T-cell (primary cell): ENCODE measurements at regions of chr12 and their contacts with region 1.

Region 1: DNA sequence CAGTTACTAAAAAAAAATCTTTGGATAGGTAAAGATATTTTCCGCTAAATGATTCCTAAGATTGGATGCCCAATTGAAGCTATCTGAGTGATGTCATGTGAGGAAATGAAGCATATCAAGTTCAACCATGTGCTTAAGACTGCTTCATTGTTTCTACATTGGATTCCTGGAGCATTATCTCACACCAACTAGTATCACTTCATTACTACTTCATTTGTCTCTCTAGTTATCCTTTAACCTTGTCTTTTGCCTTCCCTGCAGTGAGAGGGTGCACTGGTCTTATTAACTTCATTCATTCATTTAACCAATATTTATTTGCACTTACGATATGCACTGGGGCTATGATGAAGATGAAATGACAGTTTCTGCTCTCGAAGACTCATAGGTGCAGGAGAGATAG is 198.1 kb downstream of the SLC38A4 start:
- DNase-seq: no peak
- ATAC-seq: no peak
- H3K4me3 ChIP-seq: no peak overlapping the region
- H3K4me3 Mint-ChIP-seq: no peak overlapping the region
- H3K27ac ChIP-seq: no peak overlapping the region
- H3K27ac Mint-ChIP-seq: no peak overlapping the region
- H3K4me1 ChIP-seq: peaks cover 0 to 4% of the 10 kb centered on the region in 2 experiments
- H3K4me1 Mint-ChIP-seq: peaks cover 7 to 10% (median 8%) of the 10 kb centered on the region in 3 donors
- H3K27me3 ChIP-seq: no peaks in the 10 kb centered on the region
- H3K27me3 Mint-ChIP-seq: no peaks in the 10 kb centered on the region

Region 2: GRCh38 chr12:46686267-46686942 is 58.7 kb after region 1 on chr12:
- CTCF ChIA-PET with region 1: interaction called in 1 of 2 experiments, 10 read pairs
- POLR2A ChIA-PET with region 1: no interaction called
- DNase-seq: no peak
- ATAC-seq: no peak
- H3K4me3 ChIP-seq: no peak overlapping the region
- H3K4me3 Mint-ChIP-seq: no peak overlapping the region
- H3K27ac ChIP-seq: no peak overlapping the region
- H3K27ac Mint-ChIP-seq: no peak overlapping the region
- H3K4me1 ChIP-seq: no peaks in the 10 kb centered on the region
- H3K4me1 Mint-ChIP-seq: no peaks in the 10 kb centered on the region
- H3K27me3 ChIP-seq: peaks cover 0 to 7% of the 10 kb centered on the region in 2 experiments
- H3K27me3 Mint-ChIP-seq: peaks cover 5 to 7% of the 10 kb centered on the region in 2 donors